PC-9 (cell line): ENCODE measurements at regions of chr2 and their contacts with region 1.

Region 1: DNA sequence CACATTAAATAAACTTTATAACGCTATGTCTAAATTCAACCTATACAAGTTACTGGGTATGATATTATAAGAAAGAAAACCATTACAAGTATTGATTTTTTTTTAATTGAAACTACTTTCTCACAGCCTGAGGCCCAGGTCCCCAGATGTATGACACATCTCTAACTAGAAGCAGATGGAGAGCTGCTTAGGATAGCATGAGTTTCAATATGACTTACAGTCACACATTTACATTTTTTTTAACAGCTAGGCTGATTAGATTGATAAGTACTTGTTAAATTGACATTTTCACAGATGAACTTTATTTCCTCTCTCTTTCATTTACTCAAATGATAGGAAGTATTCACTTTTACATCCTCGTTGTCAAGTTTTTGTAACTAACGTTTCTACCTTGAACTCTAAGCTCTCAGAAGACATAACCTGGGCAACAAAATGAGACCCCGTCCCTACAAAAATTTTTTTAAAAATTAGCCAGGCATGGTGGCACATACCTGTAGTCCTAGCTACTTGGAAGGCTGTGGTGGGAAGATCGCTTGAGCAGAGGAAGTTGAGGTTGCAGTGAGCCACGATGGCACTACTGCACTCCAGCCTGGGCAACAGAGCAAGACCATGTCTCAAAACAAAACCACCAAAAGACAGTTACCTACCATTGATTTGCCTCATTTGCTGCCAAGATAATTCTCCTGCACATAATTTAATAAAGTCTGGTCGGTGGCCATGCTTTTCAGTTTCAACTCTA is 52.4 kb downstream of the STK39 start:
- DNase-seq: no peak
- H3K4me3 ChIP-seq: no peak overlapping the region
- H3K27ac ChIP-seq: peak overlapping the region; percentile 99
- H3K4me1 ChIP-seq: peaks cover 67% of the 10 kb centered on the region
- H3K27me3 ChIP-seq: no peaks in the 10 kb centered on the region
- CTCF ChIP-seq: no peak

Region 2: GRCh38 chr2:167331636-167332232 is 863.2 kb before region 1 on chr2:
- CTCF ChIA-PET with region 1: no interaction called
- POLR2A ChIA-PET with region 1: no interaction called
- intact Hi-C with region 1: no loop called
- DNase-seq: no peak
- H3K4me3 ChIP-seq: no peak overlapping the region
- H3K27ac ChIP-seq: no peak overlapping the region
- H3K4me1 ChIP-seq: no peaks in the 10 kb centered on the region
- H3K27me3 ChIP-seq: no peaks in the 10 kb centered on the region
- CTCF ChIP-seq: no peak

Region 3: DNA sequence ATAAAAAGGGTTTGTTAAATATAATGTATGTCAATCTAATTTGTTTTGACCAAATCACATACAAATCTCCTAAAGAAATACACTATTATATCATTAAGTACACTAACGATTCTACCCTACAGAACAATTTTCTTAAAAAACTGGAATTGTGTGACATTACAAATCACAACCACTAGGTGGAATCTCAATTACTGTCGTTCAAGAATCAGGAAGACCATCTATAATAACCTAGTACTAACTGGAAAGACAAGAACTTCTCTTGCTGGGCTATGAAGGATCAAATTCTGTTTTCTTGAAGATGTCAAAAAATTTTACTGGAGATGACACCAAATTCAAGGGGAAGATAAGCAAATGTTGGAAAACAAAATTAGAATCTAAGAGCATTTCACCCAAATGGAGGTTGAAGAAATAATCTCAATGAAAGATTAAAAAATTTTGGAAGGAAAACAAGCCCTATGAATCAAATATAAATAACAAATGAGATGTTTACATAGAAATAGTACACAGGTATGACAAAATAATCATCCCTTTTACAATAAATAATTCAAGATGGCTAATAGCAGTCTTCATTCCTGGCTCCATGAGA is 58.5 kb before region 1 on chr2:
- CTCF ChIA-PET with region 1: no interaction called
- POLR2A ChIA-PET with region 1: no interaction called
- intact Hi-C with region 1: loop called (anchors 5 kb)
- DNase-seq: no peak
- H3K4me3 ChIP-seq: no peak overlapping the region
- H3K27ac ChIP-seq: 0 out of 2 replicates have a peak overlapping the region, but pooled peaks have one; percentile 34
- H3K4me1 ChIP-seq: peaks cover 21% of the 10 kb centered on the region
- H3K27me3 ChIP-seq: no peaks in the 10 kb centered on the region
- CTCF ChIP-seq: peak; percentile 61

Region 4: DNA sequence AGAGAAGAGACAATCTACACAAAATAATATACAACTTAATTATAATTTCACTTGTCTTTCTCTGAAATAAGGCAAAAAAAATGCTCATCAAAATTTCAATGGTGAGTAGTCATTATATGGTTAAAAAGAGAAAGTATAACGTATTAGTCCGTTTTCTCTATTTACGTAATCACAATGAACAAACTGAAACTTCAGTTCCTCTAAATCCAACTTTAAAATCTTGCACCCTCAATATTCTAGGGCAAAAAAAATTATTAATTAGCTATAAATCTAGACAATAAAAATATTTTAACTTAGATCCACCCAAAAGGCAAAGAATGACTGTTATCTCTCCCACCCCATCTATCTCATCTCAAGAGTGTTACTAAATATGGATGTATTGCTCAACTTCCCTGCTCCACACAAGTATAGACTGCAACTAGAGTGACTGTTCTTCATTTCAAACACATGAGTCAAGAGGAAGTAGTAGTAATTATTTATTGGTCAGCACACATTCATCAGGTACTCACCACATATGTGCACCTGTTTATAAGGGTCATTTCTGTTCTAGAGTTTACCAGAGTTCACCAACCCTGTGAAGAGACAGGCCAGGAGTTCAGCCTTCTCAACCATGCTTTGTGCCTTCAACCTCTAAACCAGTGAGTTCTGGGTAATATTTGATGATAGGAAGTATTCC is 16.1 kb after region 1 on chr2:
- CTCF ChIA-PET with region 1: no interaction called
- POLR2A ChIA-PET with region 1: no interaction called
- intact Hi-C with region 1: loop called (anchors 2 kb)
- DNase-seq: peak; percentile 23 to 98
- H3K4me3 ChIP-seq: peak overlapping the region; percentile 27; the same call in 1 of the 2 replicates
- H3K27ac ChIP-seq: peak overlapping the region; percentile 99
- H3K4me1 ChIP-seq: peaks cover 54% of the 10 kb centered on the region
- H3K27me3 ChIP-seq: no peaks in the 10 kb centered on the region
- CTCF ChIP-seq: no peak